ENCODE measurements at regions of chr7 and their contacts with region 1.

Region 1: DNA sequence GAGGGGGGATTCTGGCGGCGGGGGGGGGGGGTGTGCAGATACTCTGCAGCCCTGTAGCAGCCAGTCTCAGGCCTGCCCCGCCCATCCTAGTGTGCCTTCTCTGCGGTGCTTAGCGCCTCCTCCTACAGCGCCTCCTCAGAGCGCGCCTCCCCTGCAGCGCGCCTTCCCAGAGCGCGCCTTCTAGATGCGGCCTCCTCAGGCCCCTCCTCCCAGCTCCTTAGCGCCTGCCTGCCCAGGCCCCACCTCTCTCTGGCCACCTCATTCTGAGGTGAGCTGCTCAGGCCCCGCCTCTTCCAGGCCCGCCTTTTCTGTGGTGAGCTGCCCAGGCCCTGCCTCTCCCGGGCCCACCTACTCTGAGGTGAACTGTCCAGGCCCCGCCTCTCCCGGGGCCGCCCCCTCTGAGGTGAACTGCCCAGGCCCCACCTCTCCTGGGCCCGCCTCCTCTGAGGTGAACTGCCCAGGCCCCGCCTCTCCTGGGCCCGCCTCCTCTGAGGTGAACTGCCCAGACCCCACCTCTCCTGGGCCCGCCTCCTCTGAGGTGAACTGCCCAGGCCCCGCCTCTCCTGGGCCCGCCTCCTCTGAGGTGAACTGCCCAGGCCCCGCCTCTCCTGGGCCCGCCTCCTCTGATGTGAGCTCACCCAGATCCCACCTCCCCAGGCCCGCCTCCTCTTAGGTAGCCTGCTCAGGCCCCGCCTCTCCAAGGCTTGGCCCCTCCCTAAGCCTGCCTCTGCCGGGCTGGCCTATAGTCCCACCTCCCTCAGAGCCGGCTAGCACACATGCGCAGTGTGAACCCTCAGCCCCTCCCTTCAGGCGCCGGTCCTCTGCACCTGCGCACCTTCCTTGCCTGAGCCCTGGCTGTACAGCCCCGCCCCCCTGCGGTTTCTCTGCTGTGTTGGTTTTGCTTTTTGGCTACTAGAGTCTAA is 2.1 kb upstream of the SGCE start:
- DNase-seq: peak; percentile 96
- H3K4me3 Mint-ChIP-seq: peak overlapping the region; percentile 82
- H3K27ac Mint-ChIP-seq: no peak overlapping the region
- H3K4me1 Mint-ChIP-seq: peaks cover 15% of the 10 kb centered on the region
- H3K27me3 Mint-ChIP-seq: peaks cover 28% of the 10 kb centered on the region

Region 2: DNA sequence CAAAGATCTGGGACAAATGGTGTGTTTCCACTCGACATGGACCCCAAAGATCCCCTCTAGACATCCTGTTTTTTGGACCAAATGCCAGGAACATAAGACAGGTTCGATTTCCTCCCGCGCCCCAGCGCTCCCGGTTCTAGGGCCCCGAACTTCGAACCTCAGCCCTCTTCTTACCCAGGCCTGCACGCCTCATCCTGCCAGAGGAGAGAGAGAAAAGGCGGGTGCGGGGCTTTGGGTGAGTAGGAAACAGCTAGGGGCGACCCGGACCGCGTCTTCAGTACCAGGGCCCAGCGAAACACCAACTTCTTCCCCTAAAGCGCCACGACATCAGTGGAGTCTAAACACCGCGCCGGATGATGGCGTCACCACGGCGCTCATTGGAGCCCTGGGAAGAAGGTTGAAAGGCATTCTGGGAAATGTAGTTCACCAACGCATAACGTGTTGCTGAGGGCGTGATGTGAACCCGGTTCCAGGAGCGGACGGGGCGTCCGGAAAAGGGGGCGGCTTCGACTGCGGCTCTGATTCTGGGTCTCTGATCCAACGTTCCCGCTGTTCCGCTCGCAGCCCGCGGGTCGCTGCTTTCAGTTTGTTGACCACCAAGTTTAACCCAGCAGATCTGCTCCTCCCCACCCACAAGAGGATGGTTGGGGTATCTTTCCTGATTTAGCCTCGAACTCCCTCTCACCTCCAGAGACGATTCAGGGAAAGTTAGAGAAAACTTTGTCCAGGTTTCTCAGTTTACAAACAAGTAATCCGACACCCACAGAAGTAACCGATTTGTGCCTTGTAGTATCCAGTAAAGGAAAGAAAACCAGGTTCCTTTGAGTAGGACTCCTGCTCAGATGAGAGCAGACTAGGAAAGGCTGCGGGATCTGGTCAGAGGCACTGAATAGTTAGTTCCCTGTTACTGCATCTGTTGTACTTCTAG is 653.7 kb before region 1 on chr7 and contains the start of gene BET1:
- intact Hi-C with region 1: loop called (anchors 5 kb)
- DNase-seq: peak; percentile 98
- H3K4me3 Mint-ChIP-seq: peak within 1 kb of the TSS; percentile 94
- H3K27ac Mint-ChIP-seq: peak within 1 kb of the TSS; percentile 96
- H3K4me1 Mint-ChIP-seq: peaks cover 20% of the 10 kb centered on the region
- H3K27me3 Mint-ChIP-seq: peaks cover 17% of the 10 kb centered on the region
- total RNA-seq, gene BET1: 19.1 and 20.0 TPM in 2 replicates

Region 3: GRCh38 chr7:94449148-94449725 is 208.8 kb before region 1 on chr7:
- intact Hi-C with region 1: loop called (anchors 2 kb)
- DNase-seq: no peak
- H3K4me3 Mint-ChIP-seq: no peak overlapping the region
- H3K27ac Mint-ChIP-seq: no peak overlapping the region
- H3K4me1 Mint-ChIP-seq: no peaks in the 10 kb centered on the region
- H3K27me3 Mint-ChIP-seq: peaks cover 10% of the 10 kb centered on the region

Region 4: GRCh38 chr7:94509879-94510581 is 148.0 kb before region 1 on chr7:
- intact Hi-C with region 1: loop called (anchors 1 kb)
- DNase-seq: peak; percentile 90
- H3K4me3 Mint-ChIP-seq: peak overlapping the region; percentile 80
- H3K27ac Mint-ChIP-seq: peak overlapping the region; percentile 88
- H3K4me1 Mint-ChIP-seq: peaks cover 34% of the 10 kb centered on the region
- H3K27me3 Mint-ChIP-seq: no peaks in the 10 kb centered on the region

Region 5: DNA sequence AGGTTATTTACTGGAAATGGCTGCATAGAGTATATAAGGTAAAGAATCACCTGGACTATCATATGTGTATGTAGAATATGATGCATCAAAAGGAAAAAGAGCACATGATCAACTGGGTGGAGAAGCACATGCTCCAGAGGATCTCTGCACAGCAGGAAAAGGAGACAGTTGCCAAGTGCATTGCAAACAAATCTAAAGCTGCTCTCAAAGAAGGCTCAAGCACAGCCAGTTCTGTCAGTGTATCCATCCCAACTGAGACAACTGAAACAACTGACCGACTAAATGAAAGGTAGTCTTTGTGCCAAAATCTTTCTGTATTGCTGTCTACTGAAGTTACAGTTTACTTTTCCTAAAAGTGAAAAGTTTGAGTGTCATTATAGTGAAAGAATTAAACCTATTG is 81.1 kb after region 1 on chr7:
- intact Hi-C with region 1: no loop called
- DNase-seq: no peak
- H3K4me3 Mint-ChIP-seq: no peak overlapping the region
- H3K27ac Mint-ChIP-seq: no peak overlapping the region
- H3K4me1 Mint-ChIP-seq: no peaks in the 10 kb centered on the region
- H3K27me3 Mint-ChIP-seq: no peaks in the 10 kb centered on the region

Region 6: DNA sequence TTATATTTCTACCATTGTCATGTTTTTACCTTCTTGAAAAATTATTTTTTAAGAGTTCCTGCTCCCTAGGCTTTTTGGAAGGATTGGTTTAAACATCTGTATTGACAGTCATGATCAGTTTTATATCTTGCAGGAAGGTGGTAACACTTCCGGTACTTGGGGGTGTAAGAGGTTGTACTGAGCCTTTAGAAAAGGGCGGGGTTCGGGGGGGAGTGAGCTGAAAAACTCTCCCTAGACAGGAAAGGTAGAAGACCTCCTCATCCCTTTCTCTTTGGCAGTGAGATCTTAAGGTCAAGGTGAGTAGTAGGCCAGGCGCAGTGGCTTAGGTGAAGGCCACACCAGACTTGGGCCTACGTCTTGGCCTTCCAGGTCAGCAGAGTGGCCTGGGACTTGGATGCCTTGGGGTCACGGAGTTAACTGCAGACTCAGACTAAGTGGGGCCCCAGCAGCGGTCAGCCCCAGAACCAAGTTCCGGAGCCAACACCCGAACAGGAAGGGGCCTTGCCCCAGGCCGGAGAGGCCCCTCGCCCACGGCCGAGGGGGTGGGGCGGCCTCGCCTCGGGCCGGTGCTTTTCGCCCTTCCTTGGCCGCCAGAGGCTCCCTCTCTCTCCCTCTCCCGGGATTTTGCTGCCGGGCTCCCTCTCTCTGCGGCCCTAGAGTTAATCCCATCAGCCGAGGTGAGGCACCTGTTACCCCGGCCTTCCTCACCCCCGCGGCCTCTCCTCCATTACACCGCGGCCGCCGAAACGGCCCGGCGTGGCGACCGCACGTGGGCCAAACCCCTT is 249.2 kb after region 1 on chr7 and contains the start of gene PPP1R9A:
- intact Hi-C with region 1: loop called (anchors 5 kb)
- DNase-seq: no peak
- H3K4me3 Mint-ChIP-seq: peak within 1 kb of the TSS; percentile 8
- H3K27ac Mint-ChIP-seq: no peak within 1 kb of the TSS
- H3K4me1 Mint-ChIP-seq: no peaks in the 10 kb centered on the region
- H3K27me3 Mint-ChIP-seq: peaks cover 46% of the 10 kb centered on the region
- total RNA-seq, gene PPP1R9A: not detected in 2 replicates